ENCODE measurements at regions of chr17 and their contacts with region 1.

Region 1: GRCh38 chr17:3004133-3004801 is 59.1 kb downstream of the OR1D5 start:
- DNase-seq: peak; percentile 89 to 99
- H3K4me3 ChIP-seq: peak overlapping the region; percentile 6; the same call in 1 of the 2 replicates
- H3K27ac ChIP-seq: peak overlapping the region; percentile 65
- H3K4me1 ChIP-seq: peaks cover 22% of the 10 kb centered on the region
- H3K27me3 ChIP-seq: no peaks in the 10 kb centered on the region
- CTCF ChIP-seq: no peak

Region 2: DNA sequence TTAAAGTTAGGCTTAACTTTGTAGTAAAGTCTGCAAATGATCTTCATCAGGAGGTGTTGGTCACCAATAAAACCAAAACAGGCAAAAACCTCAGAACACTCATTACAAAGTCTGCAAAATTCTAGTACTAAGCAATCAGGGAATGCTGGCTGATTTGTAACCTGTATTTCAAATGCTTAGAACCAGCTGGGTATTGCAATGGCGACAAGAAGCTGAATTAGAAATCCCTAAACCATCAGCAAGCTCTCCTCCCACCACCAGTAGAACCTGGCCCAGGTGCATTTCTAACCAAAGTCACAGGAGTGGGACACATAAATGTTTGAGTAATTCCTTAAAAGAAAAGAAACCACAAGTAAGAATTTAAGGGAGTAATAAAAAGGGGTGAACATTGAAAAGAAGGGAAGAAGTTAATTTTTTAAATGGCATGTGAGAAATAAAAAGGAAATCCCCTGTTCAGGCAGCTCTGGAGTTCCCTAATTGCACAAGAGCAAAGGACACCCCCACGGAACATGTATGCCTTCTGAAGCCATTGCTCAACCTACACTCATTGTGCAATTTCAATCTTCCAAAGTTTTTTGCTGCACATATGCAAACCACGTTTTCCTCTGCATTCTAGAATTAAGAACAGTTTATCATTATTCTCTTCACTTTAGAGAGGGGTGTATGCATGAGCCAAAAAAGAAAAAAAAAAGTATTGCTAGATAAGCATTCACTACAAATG is 846.4 kb before region 1 on chr17:
- CTCF ChIA-PET with region 1: interaction called, 12 read pairs
- POLR2A ChIA-PET with region 1: no interaction called
- intact Hi-C with region 1: no loop called
- DNase-seq: no peak
- H3K4me3 ChIP-seq: no peak overlapping the region
- H3K27ac ChIP-seq: no peak overlapping the region
- H3K4me1 ChIP-seq: no peaks in the 10 kb centered on the region
- H3K27me3 ChIP-seq: no peaks in the 10 kb centered on the region
- CTCF ChIP-seq: no peak

Region 3: GRCh38 chr17:2853111-2853721 is 151.1 kb before region 1 on chr17:
- CTCF ChIA-PET with region 1: interaction called, 12 read pairs
- POLR2A ChIA-PET with region 1: no interaction called
- intact Hi-C with region 1: loop called (anchors 2 kb)
- DNase-seq: peak in 1 of 2 experiments; percentile 67
- H3K4me3 ChIP-seq: peak overlapping the region; percentile 89; the same call in 1 of the 2 replicates
- H3K27ac ChIP-seq: no peak overlapping the region
- H3K4me1 ChIP-seq: peaks cover 11% of the 10 kb centered on the region; the same call in 1 of the 2 replicates
- H3K27me3 ChIP-seq: 0 out of 2 replicates have a peak, but pooled peaks cover 6% of the 10 kb centered on the region
- CTCF ChIP-seq: no peak

Region 4: GRCh38 chr17:2929881-2930533 is 74.3 kb before region 1 on chr17:
- CTCF ChIA-PET with region 1: interaction called, 8 read pairs
- POLR2A ChIA-PET with region 1: no interaction called
- intact Hi-C with region 1: loop called (anchors 2 kb)
- DNase-seq: peak in 1 of 2 experiments; percentile 49
- H3K4me3 ChIP-seq: no peak overlapping the region
- H3K27ac ChIP-seq: no peak overlapping the region
- H3K4me1 ChIP-seq: no peaks in the 10 kb centered on the region; the same call in 1 of the 2 replicates
- H3K27me3 ChIP-seq: no peaks in the 10 kb centered on the region
- CTCF ChIP-seq: peak; percentile 96

Region 5: DNA sequence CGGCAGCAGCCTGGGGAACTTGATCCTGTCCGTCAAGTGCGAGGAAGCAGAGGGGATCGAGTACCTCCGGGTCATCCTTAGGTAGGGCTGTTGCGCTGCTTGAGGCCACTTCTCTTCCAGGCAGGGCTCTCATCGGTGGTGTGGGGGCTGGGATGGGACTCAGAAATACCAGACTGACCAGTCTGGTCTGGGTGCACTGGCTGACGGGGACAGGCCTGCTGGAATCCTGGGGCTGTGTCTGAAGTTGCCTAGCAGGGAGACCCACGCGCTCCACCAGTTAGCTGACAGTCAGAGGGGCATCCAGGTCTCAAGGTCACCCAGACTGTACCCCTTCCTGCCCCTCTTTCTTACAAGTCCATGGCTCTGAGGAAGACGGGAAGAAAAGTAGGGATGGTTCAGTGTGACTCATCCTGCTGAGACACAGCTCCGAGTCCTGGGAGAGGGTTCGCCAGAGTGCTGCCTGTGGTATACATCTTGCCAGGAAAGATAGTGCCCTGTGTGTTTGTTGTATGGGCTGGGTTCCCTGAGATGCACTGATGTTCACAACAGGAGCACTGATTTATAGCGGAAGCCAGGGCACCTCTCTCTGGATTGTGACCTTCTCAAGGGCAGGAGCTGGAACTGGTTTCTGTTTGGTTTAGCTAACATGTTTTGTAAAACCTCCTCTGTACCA is 38.6 kb before region 1 on chr17:
- CTCF ChIA-PET with region 1: no interaction called
- POLR2A ChIA-PET with region 1: no interaction called
- intact Hi-C with region 1: loop called (anchors 1 kb)
- DNase-seq: peak; percentile 89 to 91
- H3K4me3 ChIP-seq: peak overlapping the region; percentile 40; the same call in 1 of the 2 replicates
- H3K27ac ChIP-seq: peak overlapping the region; percentile 84
- H3K4me1 ChIP-seq: peaks cover 35% of the 10 kb centered on the region
- H3K27me3 ChIP-seq: no peaks in the 10 kb centered on the region
- CTCF ChIP-seq: no peak

Measured in PC-9 (cell line).